Mammary epithelial cell (primary cell): ENCODE measurements at regions of chr20 and their contacts with region 1.

Region 1: GRCh38 chr20:40689943-40690835 is 1.2 kb upstream of the MAFB start:
- DNase-seq: peak; percentile 79
- H3K4me3 ChIP-seq: peak overlapping the region; percentile 63 to 67 (median 65)
- H3K27ac ChIP-seq: no peak overlapping the region
- H3K4me1 ChIP-seq: peaks cover 23% of the 10 kb centered on the region
- H3K27me3 ChIP-seq: peaks cover 17% of the 10 kb centered on the region
- CTCF ChIP-seq: peak; percentile 73 to 85

Region 2: DNA sequence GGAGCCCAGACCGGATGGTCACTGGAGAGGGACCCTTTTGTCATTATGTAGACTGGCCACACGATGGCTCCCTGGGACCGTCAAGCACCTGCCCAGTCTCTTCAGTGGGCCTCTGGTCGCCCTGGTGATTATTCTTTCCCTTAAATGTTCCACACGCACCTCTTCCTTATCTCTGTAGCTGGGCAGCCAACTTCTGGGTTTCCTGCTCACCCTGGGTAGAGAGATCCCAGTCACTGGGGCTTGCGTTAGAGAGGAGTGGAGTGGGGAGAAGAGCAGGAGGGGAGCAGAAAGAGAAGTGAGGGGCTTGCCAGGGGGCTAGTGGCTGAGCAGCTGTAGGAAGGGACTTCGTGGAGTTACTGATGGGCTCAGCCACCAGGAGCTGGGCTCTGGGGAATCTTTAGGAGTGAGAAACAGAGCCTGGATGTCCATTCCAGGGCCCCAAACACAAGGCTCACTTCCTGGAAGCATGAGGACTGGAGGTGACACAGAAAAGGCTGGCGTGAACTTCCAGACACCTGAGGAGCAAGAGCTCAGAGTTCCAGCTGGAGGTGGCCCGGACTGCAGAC is 1577.9 kb before region 1 on chr20:
- CTCF ChIA-PET with region 1: no interaction called
- dilution Hi-C with region 1: no loop called
- in situ Hi-C with region 1: no loop called
- intact Hi-C with region 1: loop called (anchors 10 kb)
- DNase-seq: peak; percentile 4
- H3K4me3 ChIP-seq: no peak overlapping the region
- H3K27ac ChIP-seq: no peak overlapping the region
- H3K4me1 ChIP-seq: no peaks in the 10 kb centered on the region
- H3K27me3 ChIP-seq: no peaks in the 10 kb centered on the region
- CTCF ChIP-seq: peak; percentile 52 to 70

Region 3: GRCh38 chr20:39885975-39886649 is 804.1 kb before region 1 on chr20:
- CTCF ChIA-PET with region 1: no interaction called
- dilution Hi-C with region 1: no loop called
- in situ Hi-C with region 1: loop called in 1 of 2 experiments (anchors 25 kb)
- intact Hi-C with region 1: loop called (anchors 1 kb)
- DNase-seq: peak; percentile 61
- H3K4me3 ChIP-seq: no peak overlapping the region
- H3K27ac ChIP-seq: no peak overlapping the region
- H3K4me1 ChIP-seq: no peaks in the 10 kb centered on the region
- H3K27me3 ChIP-seq: no peaks in the 10 kb centered on the region
- CTCF ChIP-seq: peak; percentile 58 to 59

Region 4: DNA sequence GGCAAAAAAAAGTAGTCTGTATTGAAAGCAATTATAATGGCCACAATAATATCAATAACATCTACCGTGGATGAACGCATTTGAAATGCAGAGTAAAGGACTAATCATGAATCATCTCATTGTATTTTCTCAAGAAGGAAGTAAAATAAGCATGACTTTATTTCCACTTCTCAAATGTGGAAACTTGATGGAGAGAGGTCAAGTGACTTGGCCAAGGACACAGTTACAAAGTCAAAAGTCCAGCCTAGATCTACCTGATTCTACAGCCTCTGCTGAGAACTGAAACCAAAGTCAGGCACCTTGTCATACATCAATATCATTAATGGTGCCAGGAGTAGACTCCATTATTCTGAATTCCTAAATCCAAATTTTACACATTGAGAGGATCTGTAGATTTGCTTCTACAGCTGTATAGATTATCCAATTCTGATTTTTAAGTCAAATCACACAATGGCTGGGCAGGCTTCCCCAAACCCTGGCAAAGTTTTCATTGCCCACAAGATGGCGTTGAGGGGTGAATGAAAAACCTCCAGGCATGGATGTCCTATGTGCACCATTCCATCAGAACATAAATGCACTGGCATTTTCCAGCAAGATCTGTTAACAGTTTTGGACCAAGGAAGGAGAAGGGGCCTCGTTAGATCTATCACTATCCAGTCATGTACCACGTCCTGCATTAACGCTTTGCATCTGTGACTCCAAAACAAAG is 424.2 kb before region 1 on chr20:
- CTCF ChIA-PET with region 1: interaction called, 3 read pairs
- dilution Hi-C with region 1: no loop called
- in situ Hi-C with region 1: loop called (anchors 5 to 10 kb)
- intact Hi-C with region 1: loop called (anchors 1 kb)
- DNase-seq: peak; percentile 36
- H3K4me3 ChIP-seq: no peak overlapping the region
- H3K27ac ChIP-seq: no peak overlapping the region
- H3K4me1 ChIP-seq: no peaks in the 10 kb centered on the region
- H3K27me3 ChIP-seq: no peaks in the 10 kb centered on the region
- CTCF ChIP-seq: peak; percentile 57 to 76

Region 5: DNA sequence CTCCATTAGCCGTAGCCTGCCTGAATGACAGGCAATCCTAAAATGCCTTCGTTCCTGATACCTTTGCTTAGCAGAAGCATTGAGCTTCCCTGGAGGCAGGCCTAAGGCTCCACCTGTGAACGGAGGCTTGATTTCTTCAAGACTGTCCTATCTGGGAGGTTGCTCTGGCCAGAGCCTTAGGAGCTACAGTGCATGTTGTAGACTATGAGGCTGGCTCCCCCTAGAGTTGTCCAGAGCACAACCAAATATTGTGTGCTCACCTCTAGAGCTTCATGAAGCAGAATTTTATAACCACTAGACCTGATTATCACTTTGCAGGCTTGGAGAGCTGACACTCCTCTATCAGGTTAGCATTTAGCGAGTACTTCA is 218.9 kb before region 1 on chr20:
- CTCF ChIA-PET with region 1: no interaction called
- dilution Hi-C with region 1: no loop called
- in situ Hi-C with region 1: no loop called
- intact Hi-C with region 1: loop called (anchors 2 kb)
- DNase-seq: no peak
- H3K4me3 ChIP-seq: no peak overlapping the region
- H3K27ac ChIP-seq: no peak overlapping the region
- H3K4me1 ChIP-seq: no peaks in the 10 kb centered on the region
- H3K27me3 ChIP-seq: no peaks in the 10 kb centered on the region
- CTCF ChIP-seq: peak; percentile 13 to 39

Region 6: GRCh38 chr20:40563296-40563944 is 126.8 kb before region 1 on chr20:
- CTCF ChIA-PET with region 1: no interaction called
- dilution Hi-C with region 1: no loop called
- in situ Hi-C with region 1: no loop called
- intact Hi-C with region 1: loop called (anchors 10 kb)
- DNase-seq: peak; percentile 73
- H3K4me3 ChIP-seq: no peak overlapping the region
- H3K27ac ChIP-seq: no peak overlapping the region
- H3K4me1 ChIP-seq: peaks cover 39% of the 10 kb centered on the region
- H3K27me3 ChIP-seq: no peaks in the 10 kb centered on the region
- CTCF ChIP-seq: no peak